AG04449 (cell line): ENCODE measurements at regions of chr9 and their contacts with region 1.

Region 1: DNA sequence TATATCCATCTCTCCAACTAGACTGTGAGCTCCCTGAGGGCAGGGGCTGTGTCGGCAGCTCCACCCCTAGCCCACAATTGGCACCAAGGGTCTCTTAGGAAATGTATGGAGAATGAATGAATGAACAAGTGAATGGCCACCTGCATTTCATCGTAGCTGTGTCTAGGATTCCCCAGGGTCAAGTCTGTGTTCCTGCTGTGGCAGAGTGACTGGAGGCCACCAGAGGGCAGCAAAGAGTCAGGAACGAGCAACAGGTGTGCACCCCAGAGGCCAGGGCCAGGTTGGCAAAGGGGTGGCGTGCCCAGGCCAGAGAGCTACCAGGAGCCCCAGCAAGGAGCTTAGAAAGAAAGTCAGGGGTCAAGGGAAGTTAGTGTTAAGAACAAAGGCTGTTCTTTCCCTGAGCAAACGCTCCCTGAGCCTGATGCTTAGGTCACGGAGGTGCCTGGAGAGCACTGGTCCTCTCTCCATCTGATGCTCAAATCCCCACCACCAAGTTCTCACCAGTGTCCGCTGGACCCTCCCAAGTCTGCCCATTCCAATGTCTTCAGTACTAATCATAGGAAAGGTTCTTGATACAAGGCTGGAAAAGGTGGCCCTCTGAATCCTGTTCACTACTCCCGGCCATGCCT is 160.7 kb downstream of the PAX5 start:
- DNase-seq: no peak
- H3K4me3 ChIP-seq: no peak overlapping the region
- CTCF ChIP-seq: peak; percentile 91

Region 2: DNA sequence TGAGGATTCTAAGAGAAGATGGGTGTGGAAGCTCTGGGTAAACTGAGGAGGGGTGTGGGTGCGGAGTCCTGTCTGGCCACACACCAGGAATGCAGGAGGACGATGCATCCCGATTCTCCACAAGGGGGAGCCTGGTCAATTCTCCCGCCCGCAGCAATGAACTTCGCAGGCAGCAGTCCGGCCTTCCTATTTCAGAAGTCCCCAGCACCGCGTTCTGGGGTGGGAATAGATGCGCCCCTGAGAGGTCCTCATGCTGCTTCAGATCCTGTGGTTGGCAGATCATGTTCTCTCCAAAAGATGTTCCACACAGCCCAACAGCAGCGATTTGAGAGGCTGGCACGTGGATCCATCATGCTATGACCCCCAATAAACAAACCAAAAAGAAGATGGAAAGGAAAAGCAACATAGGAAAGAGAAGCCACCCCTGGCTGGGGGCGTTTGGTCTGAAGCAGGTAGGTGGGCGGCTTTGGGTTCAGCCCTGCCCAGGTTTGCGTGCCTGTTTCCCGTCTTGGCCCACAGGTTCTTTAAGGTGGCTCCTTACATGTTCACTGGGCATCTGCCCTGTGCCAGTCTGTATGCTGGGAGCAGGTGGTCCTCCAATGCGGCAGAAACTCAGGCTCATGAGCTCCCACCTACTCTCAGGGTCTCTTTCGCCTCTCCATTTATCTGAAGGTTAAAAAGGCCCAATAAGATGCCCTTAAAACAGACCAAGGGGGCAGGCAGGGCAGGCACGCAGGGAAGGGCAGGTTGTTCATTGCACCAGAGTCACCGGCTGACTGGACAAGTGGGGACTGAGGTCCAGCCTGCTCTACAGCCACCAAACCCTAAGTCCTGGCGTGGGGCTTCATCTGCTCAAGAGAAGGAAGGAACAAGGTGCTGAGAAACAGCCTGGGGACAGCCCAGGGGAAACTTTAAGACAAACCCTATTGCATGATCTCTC is 10.9 kb before region 1 on chr9:
- CTCF ChIA-PET with region 1: interaction called, 49 read pairs
- POLR2A ChIA-PET with region 1: no interaction called
- DNase-seq: no peak
- H3K4me3 ChIP-seq: no peak overlapping the region
- CTCF ChIP-seq: peak; percentile 80

Region 3: DNA sequence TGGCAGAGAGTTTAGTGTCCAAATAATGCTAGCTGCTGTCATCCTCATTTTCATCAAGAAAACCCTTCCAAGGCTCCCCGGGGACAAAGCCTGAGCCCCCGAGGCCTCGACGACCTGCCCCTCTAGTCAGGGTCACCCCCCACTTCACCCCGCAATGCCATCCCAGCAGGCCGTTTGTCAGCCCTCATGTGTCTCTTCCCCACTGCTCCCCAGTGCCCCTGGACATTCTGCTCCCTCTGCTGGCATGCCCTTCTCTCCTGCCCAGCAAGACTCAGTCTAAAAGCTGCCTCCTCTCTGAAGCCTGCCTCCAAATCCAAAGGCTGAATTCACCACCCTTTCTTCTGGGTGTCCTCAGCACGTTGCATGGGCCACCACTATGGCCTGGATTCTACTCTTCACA is 101.4 kb after region 1 on chr9:
- CTCF ChIA-PET with region 1: interaction called, 13 read pairs
- POLR2A ChIA-PET with region 1: no interaction called
- DNase-seq: no peak
- H3K4me3 ChIP-seq: no peak overlapping the region
- CTCF ChIP-seq: no peak

Region 4: DNA sequence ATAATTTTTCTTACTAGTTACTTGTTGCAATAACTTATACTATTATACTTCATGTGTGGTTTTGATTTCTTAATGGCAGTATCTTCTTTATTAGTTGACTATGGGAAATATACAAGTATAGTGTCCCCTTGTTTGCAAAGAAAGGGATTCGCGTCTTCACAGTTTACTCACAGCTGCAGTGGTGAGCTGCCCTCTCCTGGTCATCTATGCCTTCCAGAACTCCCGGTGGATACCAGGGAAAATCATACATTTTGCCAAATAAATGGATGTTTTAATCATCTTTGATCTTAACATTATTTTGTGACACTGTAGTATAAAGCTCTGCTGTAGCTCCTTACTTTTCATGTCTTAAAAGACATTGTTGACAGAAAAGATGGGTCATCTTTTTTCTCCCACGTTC is 389.0 kb after region 1 on chr9:
- CTCF ChIA-PET with region 1: interaction called, 16 read pairs
- POLR2A ChIA-PET with region 1: no interaction called
- DNase-seq: no peak
- H3K4me3 ChIP-seq: no peak overlapping the region
- CTCF ChIP-seq: peak; percentile 47

Region 5: DNA sequence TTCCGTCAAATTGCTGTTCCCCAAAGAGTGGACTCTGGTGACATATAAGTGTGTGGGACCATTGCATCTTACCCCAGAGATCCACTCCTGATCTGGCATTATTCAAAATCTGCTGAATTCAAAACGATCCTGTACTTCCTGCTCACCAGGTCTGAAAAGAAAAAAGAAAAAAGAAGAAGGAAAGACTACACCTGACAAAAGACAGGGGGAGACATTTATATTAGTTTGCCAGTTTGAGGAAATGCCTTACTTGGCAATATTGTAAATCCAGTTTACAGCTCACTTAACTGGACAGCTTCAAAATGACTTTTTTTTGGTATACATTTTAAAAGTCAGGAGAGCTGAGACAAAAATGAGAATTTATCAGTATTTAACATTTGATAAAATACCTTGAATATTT is 534.1 kb after region 1 on chr9:
- CTCF ChIA-PET with region 1: interaction called, 50 read pairs
- POLR2A ChIA-PET with region 1: no interaction called
- DNase-seq: no peak
- H3K4me3 ChIP-seq: no peak overlapping the region
- CTCF ChIP-seq: no peak